CD4-positive, alpha-beta T cell (primary cell): ENCODE measurements at regions of chr17 and their contacts with region 1.

Region 1: GRCh38 chr17:716238-716637 is 1.6 kb upstream of the VPS53 start:
- DNase-seq: no peak
- ATAC-seq: no peak
- H3K4me3 ChIP-seq: no peak overlapping the region
- H3K4me3 Mint-ChIP-seq: peak overlapping the region; percentile 77
- H3K27ac ChIP-seq: no peak overlapping the region
- H3K27ac Mint-ChIP-seq: no peak overlapping the region
- H3K4me1 ChIP-seq: peaks cover 27% of the 10 kb centered on the region
- H3K4me1 Mint-ChIP-seq: peaks cover 28% of the 10 kb centered on the region
- H3K27me3 ChIP-seq: no peaks in the 10 kb centered on the region
- H3K27me3 Mint-ChIP-seq: no peaks in the 10 kb centered on the region
- CTCF ChIP-seq: no peak

Region 2: DNA sequence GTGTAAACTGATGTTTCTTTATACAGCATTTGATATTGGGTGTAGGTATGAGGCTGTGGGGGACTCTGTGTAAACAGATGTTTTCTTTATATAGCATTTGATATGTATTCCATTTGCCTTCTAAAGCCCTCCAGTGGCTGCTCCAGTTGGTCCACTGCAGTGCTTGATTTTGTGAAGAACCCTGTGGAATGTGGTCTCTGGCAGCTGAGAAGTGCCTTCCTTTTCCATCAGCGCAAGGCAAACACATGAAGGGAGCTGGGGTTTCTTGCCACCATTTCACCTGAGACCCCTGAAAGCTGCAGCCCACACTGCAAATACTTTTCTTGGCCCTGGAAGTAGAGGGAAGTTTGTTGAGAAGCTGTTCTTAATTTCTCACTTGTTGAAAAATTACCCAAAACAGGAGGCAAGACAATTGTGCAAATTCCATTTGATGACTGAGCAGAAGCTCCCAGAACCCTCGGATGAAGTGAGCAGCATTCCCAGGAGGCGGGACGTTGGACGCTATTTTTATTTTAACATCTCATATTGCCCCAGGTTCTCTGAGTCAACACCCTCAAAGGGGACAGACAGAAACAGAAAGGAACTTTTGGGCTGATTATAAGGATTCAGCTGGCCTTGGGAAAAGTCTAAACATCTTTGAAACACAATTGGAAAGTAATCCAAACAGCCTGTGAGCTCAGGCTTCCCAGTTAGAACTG is 205.1 kb before region 1 on chr17:
- CTCF ChIA-PET with region 1: no interaction called
- POLR2A ChIA-PET with region 1: no interaction called
- intact Hi-C with region 1: no loop called
- DNase-seq: peak in 1 of 14 experiments; percentile 1
- ATAC-seq: no peak
- H3K4me3 ChIP-seq: no peak overlapping the region
- H3K4me3 Mint-ChIP-seq: no peak overlapping the region
- H3K27ac ChIP-seq: no peak overlapping the region
- H3K27ac Mint-ChIP-seq: no peak overlapping the region
- H3K4me1 ChIP-seq: no peaks in the 10 kb centered on the region
- H3K4me1 Mint-ChIP-seq: peaks cover 4% of the 10 kb centered on the region
- H3K27me3 ChIP-seq: no peaks in the 10 kb centered on the region
- H3K27me3 Mint-ChIP-seq: no peaks in the 10 kb centered on the region
- CTCF ChIP-seq: no peak

Region 3: GRCh38 chr17:574061-574460 is 142.2 kb before region 1 on chr17:
- CTCF ChIA-PET with region 1: no interaction called
- POLR2A ChIA-PET with region 1: no interaction called
- intact Hi-C with region 1: no loop called
- DNase-seq: no peak
- ATAC-seq: no peak
- H3K4me3 ChIP-seq: no peak overlapping the region
- H3K4me3 Mint-ChIP-seq: no peak overlapping the region
- H3K27ac ChIP-seq: no peak overlapping the region
- H3K27ac Mint-ChIP-seq: no peak overlapping the region
- H3K4me1 ChIP-seq: no peaks in the 10 kb centered on the region
- H3K4me1 Mint-ChIP-seq: no peaks in the 10 kb centered on the region
- H3K27me3 ChIP-seq: no peaks in the 10 kb centered on the region
- H3K27me3 Mint-ChIP-seq: no peaks in the 10 kb centered on the region
- CTCF ChIP-seq: no peak

Region 4: DNA sequence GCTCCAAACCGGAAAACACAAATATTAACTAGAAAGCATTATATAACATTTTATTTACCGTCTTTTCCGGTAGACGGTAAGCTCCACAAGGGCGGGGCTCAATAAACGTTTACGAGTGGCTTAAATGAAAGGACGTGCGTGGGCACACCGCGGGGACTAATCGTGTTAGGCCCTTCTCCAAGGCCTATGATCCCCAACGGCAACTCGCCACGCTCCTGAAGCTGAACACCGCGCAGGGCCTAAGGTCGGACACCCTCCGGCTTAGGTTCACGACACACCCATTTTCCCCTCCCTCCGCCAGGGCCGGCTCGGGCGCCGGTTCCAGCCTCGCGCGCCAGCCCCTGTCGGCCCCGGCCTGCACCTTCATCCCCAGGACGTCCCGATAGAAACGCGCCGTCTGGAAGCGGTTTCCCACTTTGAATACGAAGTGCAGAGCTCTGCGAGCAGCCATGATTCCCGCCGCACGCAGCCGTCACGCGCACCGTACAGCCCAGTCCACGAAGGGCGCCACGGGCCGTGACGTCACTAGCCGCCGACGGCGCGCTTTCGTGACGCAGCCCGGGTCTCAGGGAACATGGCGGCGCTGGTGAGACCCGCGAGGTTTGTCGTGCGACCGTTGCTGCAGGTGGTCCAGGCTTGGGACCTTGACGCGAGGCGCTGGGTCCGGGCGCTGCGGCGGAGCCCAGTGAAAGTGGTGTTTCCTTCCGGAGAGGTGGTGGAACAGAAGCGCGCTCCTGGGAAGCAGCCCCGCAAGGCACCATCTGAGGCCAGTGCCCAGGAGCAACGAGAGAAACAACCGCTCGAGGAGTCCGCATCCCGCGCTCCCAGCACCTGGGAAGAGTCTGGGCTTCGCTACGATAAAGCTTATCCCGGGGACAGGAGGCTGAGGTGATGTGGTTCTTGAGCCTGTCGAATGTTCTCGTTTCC is 65.8 kb after region 1 on chr17 and contains the starts of genes GLOD4 and MRM3:
- CTCF ChIA-PET with region 1: interaction called, 4 read pairs
- POLR2A ChIA-PET with region 1: interaction called, 15 read pairs
- intact Hi-C with region 1: loop called in 1 of 2 experiments (anchors 2 kb)
- DNase-seq: peak; percentile 86 to 98 (median 94)
- ATAC-seq: peak; percentile 91
- H3K4me3 ChIP-seq: peak within 1 kb of the TSS; percentile 71
- H3K4me3 Mint-ChIP-seq: peak within 1 kb of the TSS; percentile 100
- H3K27ac ChIP-seq: peak within 1 kb of the TSS; percentile 93 to 94
- H3K27ac Mint-ChIP-seq: peak within 1 kb of the TSS; percentile 99
- H3K4me1 ChIP-seq: peaks cover 27% of the 10 kb centered on the region
- H3K4me1 Mint-ChIP-seq: peaks cover 40% of the 10 kb centered on the region
- H3K27me3 ChIP-seq: no peaks in the 10 kb centered on the region
- H3K27me3 Mint-ChIP-seq: no peaks in the 10 kb centered on the region
- CTCF ChIP-seq: no peak
- total RNA-seq, gene GLOD4: 88.0 to 89.3 TPM
- total RNA-seq, gene MRM3: 40.8 to 44.1 TPM